ENCODE measurements at regions of chr14 and their contacts with region 1.

Region 1: GRCh38 chr14:31360919-31361662 is 59.3 kb downstream of the HEATR5A start:
- DNase-seq: no peak
- H3K4me3 Mint-ChIP-seq: no peak overlapping the region
- H3K27ac Mint-ChIP-seq: no peak overlapping the region
- H3K4me1 Mint-ChIP-seq: no peaks in the 10 kb centered on the region
- H3K27me3 Mint-ChIP-seq: no peaks in the 10 kb centered on the region

Region 2: GRCh38 chr14:30375296-30375892 is 985.7 kb before region 1 on chr14:
- CTCF ChIA-PET with region 1: no interaction called
- intact Hi-C with region 1: loop called (anchors 1 kb)
- DNase-seq: peak; percentile 84
- H3K4me3 Mint-ChIP-seq: no peak overlapping the region
- H3K27ac Mint-ChIP-seq: no peak overlapping the region
- H3K4me1 Mint-ChIP-seq: no peaks in the 10 kb centered on the region
- H3K27me3 Mint-ChIP-seq: peaks cover 10% of the 10 kb centered on the region

Region 3: GRCh38 chr14:30874120-30874998 is 486.7 kb before region 1 on chr14 and contains the start of gene COCH:
- CTCF ChIA-PET with region 1: no interaction called
- intact Hi-C with region 1: loop called (anchors 10 kb)
- DNase-seq: peak; percentile 34
- H3K4me3 Mint-ChIP-seq: peak within 1 kb of the TSS; percentile 78
- H3K27ac Mint-ChIP-seq: no peak within 1 kb of the TSS
- H3K4me1 Mint-ChIP-seq: peaks cover 9% of the 10 kb centered on the region
- H3K27me3 Mint-ChIP-seq: peaks cover 45% of the 10 kb centered on the region
- total RNA-seq, gene COCH: 1.3 TPM

Region 4: DNA sequence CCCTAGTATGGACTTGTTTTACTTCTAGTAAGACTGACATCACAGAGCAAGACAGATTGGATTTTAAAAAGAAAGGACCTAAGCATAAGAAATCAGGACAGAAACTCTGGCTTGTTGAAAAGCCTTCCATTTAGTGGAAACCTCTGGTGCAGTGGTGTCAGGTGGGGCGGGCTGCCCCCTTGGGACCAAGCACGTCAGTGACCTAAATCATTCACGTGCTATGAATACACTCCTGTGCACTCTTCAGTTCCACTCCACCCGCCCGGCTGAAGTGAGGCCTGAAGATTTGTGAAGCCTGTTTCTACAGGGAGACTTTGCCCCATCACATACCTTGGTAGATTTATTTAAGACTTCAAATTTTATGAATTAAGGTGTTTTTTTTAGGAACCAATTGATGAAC is 276.7 kb before region 1 on chr14:
- CTCF ChIA-PET with region 1: no interaction called
- intact Hi-C with region 1: loop called (anchors 1 kb)
- DNase-seq: no peak
- H3K4me3 Mint-ChIP-seq: no peak overlapping the region
- H3K27ac Mint-ChIP-seq: no peak overlapping the region
- H3K4me1 Mint-ChIP-seq: no peaks in the 10 kb centered on the region
- H3K27me3 Mint-ChIP-seq: no peaks in the 10 kb centered on the region

Region 5: DNA sequence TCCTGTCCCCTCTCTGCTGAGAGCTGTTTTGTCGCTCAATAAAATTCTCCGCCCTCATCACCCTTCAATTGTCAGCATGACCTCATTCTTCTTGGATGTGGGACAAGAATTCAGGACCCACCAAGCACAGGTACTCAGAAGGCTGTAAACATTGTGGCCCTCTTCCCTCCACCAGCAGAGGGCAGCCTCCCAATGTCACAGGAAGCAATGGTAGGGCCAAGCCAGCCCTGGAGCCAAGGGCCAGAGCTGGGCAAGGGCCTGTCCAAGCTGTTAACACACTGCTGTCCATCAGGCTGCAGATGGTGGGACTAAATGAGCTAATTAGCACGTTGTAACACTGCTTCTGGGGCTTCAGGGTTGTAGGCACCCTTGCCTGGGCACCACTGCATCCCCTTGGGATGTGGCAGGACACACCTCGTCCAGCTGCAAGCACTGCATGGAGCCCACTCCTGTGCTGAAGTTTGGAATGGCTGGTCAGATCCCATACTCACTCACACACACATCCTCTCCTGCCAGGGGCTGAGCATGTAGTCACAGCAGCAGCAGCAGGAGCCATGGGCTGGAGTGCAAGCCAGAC is 90.8 kb before region 1 on chr14:
- CTCF ChIA-PET with region 1: no interaction called
- intact Hi-C with region 1: loop called (anchors 5 kb)
- DNase-seq: peak; percentile 33
- H3K4me3 Mint-ChIP-seq: no peak overlapping the region
- H3K27ac Mint-ChIP-seq: no peak overlapping the region
- H3K4me1 Mint-ChIP-seq: peaks cover 7% of the 10 kb centered on the region
- H3K27me3 Mint-ChIP-seq: no peaks in the 10 kb centered on the region

Measured in activated naive CD4-positive, alpha-beta T cell treated with anti-CD3 and anti-CD28 coated beads for 36 hours (primary cell).